Activated CD4-positive, alpha-beta memory T cell treated with anti-CD3 and anti-CD28 coated beads, Interleukin-2, amount 10 ng/mL, durations not matched to agents 7 days and 5 days (primary cell): ENCODE measurements at regions of chr19 and their contacts with region 1.

Region 1: DNA sequence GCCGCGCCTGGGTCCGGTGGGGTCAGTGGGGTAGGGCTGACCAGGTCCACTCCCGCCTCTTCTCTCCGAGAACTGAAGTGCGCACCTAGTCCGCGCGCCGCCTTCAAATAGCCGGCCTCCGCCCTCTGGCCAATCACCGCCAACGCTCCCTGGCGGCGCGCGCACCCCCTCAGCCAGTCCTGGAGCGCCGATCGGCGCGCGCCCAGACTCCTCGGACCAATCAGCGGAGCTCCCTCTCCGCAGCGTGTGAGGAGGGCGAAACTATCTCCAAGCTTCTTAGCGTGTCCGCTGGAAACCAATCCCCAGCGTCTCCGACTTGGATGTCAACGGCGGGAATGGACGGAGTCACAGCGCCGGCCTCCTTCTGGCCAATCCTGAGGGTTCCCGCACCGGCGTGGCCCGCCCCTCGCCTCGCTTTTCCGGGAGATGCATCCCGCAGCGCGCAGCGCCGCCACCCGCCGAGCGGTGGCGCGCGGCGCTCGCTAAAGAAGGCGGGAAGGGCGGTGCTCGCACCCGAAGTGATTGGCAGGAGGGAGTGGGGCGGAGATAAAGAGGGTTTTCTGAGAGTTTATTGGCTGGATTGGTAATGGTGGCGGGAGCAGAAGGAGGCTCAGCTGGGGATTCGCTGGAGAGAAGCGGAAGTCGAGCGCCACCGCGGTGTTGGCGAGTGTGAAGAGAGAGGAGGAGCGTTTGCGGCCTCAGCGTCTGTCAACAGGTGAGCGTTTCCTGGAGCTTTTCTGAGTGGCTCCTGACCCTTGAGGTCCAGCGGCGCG is at the start of gene ASF1B:
- DNase-seq: peak; percentile 99
- H3K4me3 Mint-ChIP-seq: peak within 1 kb of the TSS; percentile 81
- H3K27ac Mint-ChIP-seq: peak within 1 kb of the TSS; percentile 91
- H3K4me1 Mint-ChIP-seq: peaks cover 39% of the 10 kb centered on the region
- H3K27me3 Mint-ChIP-seq: no peaks in the 10 kb centered on the region
- total RNA-seq, gene ASF1B: 93.5 to 94.8 TPM

Region 2: GRCh38 chr19:13913352-13913751 is 223.3 kb before region 1 on chr19:
- CTCF ChIA-PET with region 1: no interaction called
- POLR2A ChIA-PET with region 1: no interaction called
- DNase-seq: no peak
- H3K4me3 Mint-ChIP-seq: no peak overlapping the region
- H3K27ac Mint-ChIP-seq: no peak overlapping the region
- H3K4me1 Mint-ChIP-seq: peaks cover 2% of the 10 kb centered on the region
- H3K27me3 Mint-ChIP-seq: no peaks in the 10 kb centered on the region

Region 3: DNA sequence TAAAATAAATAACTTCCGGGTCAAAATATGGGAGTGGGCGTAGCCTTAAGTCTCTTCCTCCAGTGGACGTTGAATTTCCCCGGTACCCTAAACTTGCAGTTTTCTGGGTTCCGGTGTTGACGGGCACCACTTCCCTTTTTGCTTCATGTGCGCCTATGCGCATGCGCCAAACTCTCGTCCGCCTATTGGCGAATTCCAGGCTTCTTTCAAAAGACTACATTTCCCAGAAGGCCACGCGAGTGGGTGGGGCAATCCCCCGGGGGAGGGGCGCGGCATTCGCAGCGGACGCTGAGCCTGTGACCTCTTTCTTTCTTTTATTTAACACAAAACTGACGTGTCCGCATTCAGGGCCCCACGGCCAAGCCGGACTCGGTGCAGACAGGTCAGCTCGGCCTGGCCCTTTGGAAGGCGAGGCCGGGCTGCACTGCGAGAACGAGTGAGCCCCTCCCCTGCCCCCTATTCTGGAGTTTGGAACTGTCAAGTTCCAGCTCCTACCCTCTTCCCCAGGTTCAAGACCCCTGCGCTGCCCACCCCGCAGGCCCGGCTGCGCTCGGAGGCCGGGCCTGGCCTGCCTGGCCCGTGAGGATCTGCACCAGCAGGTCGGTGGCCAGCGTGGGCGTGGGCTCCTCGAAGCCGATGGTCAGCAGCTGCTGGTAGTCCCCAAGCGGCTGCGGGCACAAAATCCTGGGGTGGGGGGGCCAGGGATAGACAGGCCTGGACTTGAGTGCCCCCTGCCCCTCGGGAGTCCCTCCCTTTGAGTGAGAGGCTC is 55.2 kb before region 1 on chr19:
- CTCF ChIA-PET with region 1: interaction called, 8 read pairs
- POLR2A ChIA-PET with region 1: interaction called, 17 read pairs
- DNase-seq: peak; percentile 99
- H3K4me3 Mint-ChIP-seq: peak overlapping the region; percentile 95
- H3K27ac Mint-ChIP-seq: peak overlapping the region; percentile 91
- H3K4me1 Mint-ChIP-seq: peaks cover 20% of the 10 kb centered on the region
- H3K27me3 Mint-ChIP-seq: no peaks in the 10 kb centered on the region

Region 4: DNA sequence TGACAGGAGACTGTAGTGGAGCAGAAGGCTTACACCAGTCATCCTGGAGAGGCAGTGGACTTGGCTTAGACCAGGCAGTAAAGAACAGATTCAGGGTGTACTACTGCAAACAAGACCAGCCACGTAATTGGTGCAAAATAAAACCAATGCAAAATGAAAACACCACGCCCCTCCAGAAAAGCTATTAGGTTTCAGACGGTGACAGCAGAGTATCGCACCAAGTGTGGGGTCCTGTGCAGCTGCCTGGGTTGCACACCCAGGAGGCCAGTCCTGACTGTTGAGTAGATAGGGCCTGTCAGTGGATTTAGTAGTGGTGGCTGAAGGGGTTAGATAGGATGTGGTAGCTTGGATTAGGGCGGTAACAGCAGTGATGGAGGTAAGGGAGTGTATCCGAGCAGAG is 13.8 kb before region 1 on chr19:
- CTCF ChIA-PET with region 1: interaction called, 25 read pairs
- POLR2A ChIA-PET with region 1: interaction called, 57 read pairs
- DNase-seq: no peak
- H3K4me3 Mint-ChIP-seq: no peak overlapping the region
- H3K27ac Mint-ChIP-seq: no peak overlapping the region
- H3K4me1 Mint-ChIP-seq: peaks cover 14% of the 10 kb centered on the region
- H3K27me3 Mint-ChIP-seq: no peaks in the 10 kb centered on the region

Region 5: DNA sequence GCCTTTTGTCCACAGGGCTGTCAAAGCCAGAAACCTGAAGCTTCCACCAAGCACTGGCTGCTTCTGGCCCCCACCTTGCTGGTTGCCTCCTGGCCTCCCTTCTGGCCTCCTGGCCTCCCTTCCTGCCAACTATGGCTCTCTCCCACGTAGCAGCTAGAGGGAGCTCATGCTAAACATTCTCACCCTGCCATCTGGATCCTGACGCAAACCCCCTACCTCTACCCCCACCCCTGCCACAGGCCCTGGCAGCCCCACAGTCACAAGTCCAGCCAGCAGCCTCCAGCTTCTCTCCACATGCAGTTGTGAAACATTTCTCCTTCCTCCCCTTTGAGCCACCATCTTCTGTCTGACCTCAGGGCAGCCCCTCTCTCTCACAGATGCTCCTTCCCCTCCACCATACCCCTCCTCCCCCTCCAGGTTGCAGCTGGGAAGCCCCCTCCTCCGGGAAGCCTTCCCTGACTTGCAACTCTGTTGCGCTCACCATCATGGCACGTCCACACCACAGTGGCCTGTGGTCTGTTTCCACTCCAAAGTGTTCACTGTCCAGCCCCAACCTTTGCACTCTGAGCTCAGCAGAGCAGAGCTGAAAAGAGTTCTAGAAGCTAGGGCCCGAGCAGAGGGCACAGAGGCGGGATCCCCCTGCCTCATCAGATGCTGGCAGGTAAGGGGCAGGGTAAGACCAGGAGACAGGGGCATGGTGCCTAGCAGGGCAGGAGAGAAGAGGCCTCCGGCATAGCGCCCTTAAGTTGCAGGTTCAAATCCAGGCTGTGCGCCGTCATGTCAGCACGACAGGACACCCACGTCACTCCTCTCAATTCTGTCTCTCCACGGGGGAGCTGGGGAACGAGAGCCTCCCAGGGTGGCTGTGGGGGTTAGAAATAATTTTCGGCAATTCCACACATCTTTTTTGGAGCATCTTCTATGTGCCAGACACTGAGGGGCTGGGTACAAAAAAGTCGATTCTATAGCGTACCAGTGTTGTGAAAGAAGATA is 62.0 kb after region 1 on chr19:
- CTCF ChIA-PET with region 1: interaction called, 13 read pairs
- POLR2A ChIA-PET with region 1: interaction called, 4 read pairs
- DNase-seq: no peak
- H3K4me3 Mint-ChIP-seq: no peak overlapping the region
- H3K27ac Mint-ChIP-seq: no peak overlapping the region
- H3K4me1 Mint-ChIP-seq: peaks cover 15% of the 10 kb centered on the region
- H3K27me3 Mint-ChIP-seq: peaks cover 6% of the 10 kb centered on the region

Region 6: GRCh38 chr19:14383661-14384555 is 247.2 kb after region 1 on chr19:
- CTCF ChIA-PET with region 1: interaction called, 31 read pairs
- POLR2A ChIA-PET with region 1: interaction called, 30 read pairs
- DNase-seq: peak; percentile 63
- H3K4me3 Mint-ChIP-seq: peak overlapping the region; percentile 92
- H3K27ac Mint-ChIP-seq: peak overlapping the region; percentile 90
- H3K4me1 Mint-ChIP-seq: peaks cover 38% of the 10 kb centered on the region
- H3K27me3 Mint-ChIP-seq: no peaks in the 10 kb centered on the region

Region 7: DNA sequence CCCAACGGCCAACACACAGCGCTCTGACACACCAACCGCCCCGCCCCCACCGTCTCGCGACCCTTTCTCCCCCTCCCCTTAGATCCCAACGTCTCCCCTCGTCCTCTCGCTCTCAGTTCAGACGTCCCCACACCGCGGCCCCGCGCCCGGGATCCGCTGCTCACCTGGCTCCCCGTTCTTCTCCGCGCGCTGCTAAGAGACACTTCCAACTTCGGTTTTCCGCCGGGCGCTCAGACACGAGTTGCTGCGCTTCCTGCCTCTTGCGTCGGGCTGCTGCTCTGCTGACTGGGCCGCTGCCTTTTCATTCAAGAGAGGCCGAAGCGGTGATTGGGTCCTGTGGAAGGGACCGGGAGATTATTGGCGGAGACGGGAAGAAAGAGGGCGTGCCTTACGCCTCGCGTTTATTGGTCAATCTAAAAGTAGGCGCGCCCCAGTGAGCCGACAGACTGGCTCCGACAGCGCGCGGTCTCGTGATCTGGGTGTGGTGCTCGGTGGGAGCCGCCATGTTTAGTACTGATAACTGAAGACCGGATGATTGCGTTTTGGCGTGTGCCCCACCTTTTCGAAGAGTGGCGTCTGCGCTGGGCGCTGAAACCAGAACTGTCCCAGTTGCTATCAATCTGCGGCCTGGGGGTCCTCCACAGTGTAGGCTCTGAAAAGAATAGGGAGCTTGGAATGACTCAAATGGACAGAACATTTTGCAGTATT is 282.6 kb after region 1 on chr19 and contains the start of gene DDX39A:
- CTCF ChIA-PET with region 1: interaction called, 11 read pairs
- POLR2A ChIA-PET with region 1: interaction called, 11 read pairs
- DNase-seq: peak; percentile 99
- H3K4me3 Mint-ChIP-seq: peak within 1 kb of the TSS; percentile 88
- H3K27ac Mint-ChIP-seq: peak within 1 kb of the TSS; percentile 96
- H3K4me1 Mint-ChIP-seq: peaks cover 34% of the 10 kb centered on the region
- H3K27me3 Mint-ChIP-seq: no peaks in the 10 kb centered on the region
- total RNA-seq, gene DDX39A: 233 to 234 TPM